GM18951 (cell line): ENCODE measurements at regions of chr11 and their contacts with region 1.

Region 1: GRCh38 chr11:130434521-130435223 is 6.3 kb upstream of the ADAMTS8 start:
- POLR2A ChIP-seq: no peak

Region 2: GRCh38 chr11:130861902-130862860 is 427.5 kb after region 1 on chr11:
- in situ Hi-C with region 1: loop called (anchors 5 kb)
- POLR2A ChIP-seq: no peak